Transverse colon (tissue), 4 donors: ENCODE measurements at regions of chr2 and their contacts with region 1.

Region 1: GRCh38 chr2:224357098-224357901 is 44.6 kb downstream of the FAM124B start:
- DNase-seq: peak; percentile 53
- H3K4me3 ChIP-seq: no peak overlapping the region
- H3K27ac ChIP-seq: no peak overlapping the region
- H3K4me1 ChIP-seq: no peaks in the 10 kb centered on the region
- H3K27me3 ChIP-seq: no peaks in the 10 kb centered on the region
- CTCF ChIP-seq: peak; percentile 74 to 85 (median 83)
- EP300 ChIP-seq: no peak
- POLR2A ChIP-seq: no peak

Region 2: GRCh38 chr2:224077773-224078507 is 279.4 kb before region 1 on chr2:
- in situ Hi-C with region 1: no loop called
- intact Hi-C with region 1: no loop called
- DNase-seq: no peak
- H3K4me3 ChIP-seq: no peak overlapping the region
- H3K27ac ChIP-seq: no peak overlapping the region
- H3K4me1 ChIP-seq: no peaks in the 10 kb centered on the region
- H3K27me3 ChIP-seq: no peaks in the 10 kb centered on the region
- CTCF ChIP-seq: no peak
- EP300 ChIP-seq: no peak
- POLR2A ChIP-seq: no peak

Region 3: GRCh38 chr2:224449212-224450147 is 92.2 kb after region 1 on chr2:
- in situ Hi-C with region 1: no loop called
- intact Hi-C with region 1: loop called (anchors 10 kb)
- DNase-seq: no peak
- H3K4me3 ChIP-seq: no peak overlapping the region
- H3K27ac ChIP-seq: no peak overlapping the region
- H3K4me1 ChIP-seq: no peaks in the 10 kb centered on the region
- H3K27me3 ChIP-seq: no peaks in the 10 kb centered on the region
- CTCF ChIP-seq: peak in 3 of 5 experiments; percentile 25 to 31 (median 26)
- EP300 ChIP-seq: no peak
- POLR2A ChIP-seq: no peak

Region 4: DNA sequence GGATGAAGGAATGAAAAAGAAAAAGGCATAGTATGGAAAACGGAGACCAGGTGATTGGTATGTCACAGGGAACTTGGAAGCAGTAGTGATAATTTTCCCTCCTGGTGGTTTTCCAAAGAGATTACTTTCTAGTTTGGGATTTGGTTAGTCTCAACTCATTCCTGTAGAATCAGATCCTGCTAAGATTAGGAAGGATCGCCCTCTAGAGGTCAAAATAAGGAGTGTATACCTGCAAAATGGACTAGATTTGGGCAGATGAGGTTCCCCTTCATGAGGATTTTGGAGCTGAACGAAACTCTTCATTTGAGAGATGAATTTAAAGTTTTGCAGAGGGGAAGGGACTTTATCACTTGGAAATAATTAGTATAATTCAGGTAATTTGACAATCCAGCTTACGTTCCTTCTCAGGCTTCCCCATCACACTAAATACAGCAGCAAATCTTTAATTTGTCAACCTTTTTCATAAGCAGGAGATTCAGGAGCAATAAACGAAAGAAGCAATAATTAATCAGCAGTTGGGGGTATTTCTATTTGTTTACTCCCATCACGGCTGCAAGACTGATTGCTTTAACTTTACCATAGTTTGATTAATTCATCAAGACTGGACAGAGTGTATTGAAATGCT is 293.6 kb after region 1 on chr2:
- in situ Hi-C with region 1: loop called (anchors 5 to 10 kb)
- intact Hi-C with region 1: loop called (anchors 5 kb)
- DNase-seq: no peak
- H3K4me3 ChIP-seq: no peak overlapping the region
- H3K27ac ChIP-seq: no peak overlapping the region
- H3K4me1 ChIP-seq: peaks cover 0 to 8% (median 0%) of the 10 kb centered on the region in 4 donors
- H3K27me3 ChIP-seq: no peaks in the 10 kb centered on the region
- CTCF ChIP-seq: peak; percentile 67 to 83 (median 77)
- EP300 ChIP-seq: no peak
- POLR2A ChIP-seq: no peak

Region 5: GRCh38 chr2:224764565-224765236 is 407.4 kb after region 1 on chr2:
- in situ Hi-C with region 1: loop called in 1 of 4 experiments (anchors 25 kb)
- intact Hi-C with region 1: no loop called
- DNase-seq: no peak
- H3K4me3 ChIP-seq: no peak overlapping the region
- H3K27ac ChIP-seq: no peak overlapping the region
- H3K4me1 ChIP-seq: no peaks in the 10 kb centered on the region
- H3K27me3 ChIP-seq: no peaks in the 10 kb centered on the region
- CTCF ChIP-seq: no peak
- EP300 ChIP-seq: no peak
- POLR2A ChIP-seq: no peak

Region 6: DNA sequence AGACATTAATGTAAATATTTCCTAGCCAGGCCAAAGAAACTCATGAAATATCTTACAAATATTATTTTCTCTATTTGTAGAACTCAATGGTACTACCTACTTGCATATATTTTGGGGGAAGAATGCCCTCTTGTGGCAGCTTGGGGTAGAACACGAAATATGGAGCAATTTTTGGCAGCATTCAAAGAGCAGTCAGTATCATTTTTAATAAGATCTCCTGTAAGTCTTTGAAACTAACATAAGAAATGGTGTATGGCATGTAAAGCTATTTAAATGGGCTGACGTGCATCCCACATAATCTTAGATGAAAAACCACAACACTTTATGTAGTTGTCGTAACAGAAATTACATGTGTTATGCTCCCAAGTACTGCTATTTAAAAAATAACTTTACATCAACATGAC is 421.2 kb after region 1 on chr2:
- in situ Hi-C with region 1: loop called in 3 of 4 experiments (anchors 5 to 25 kb)
- intact Hi-C with region 1: no loop called
- DNase-seq: peak; percentile 64
- H3K4me3 ChIP-seq: no peak overlapping the region
- H3K27ac ChIP-seq: no peak overlapping the region
- H3K4me1 ChIP-seq: peaks cover 5 to 26% (median 10%) of the 10 kb centered on the region in 4 donors
- H3K27me3 ChIP-seq: no peaks in the 10 kb centered on the region
- CTCF ChIP-seq: peak; percentile 65 to 77 (median 72)
- EP300 ChIP-seq: no peak
- POLR2A ChIP-seq: no peak

Region 7: DNA sequence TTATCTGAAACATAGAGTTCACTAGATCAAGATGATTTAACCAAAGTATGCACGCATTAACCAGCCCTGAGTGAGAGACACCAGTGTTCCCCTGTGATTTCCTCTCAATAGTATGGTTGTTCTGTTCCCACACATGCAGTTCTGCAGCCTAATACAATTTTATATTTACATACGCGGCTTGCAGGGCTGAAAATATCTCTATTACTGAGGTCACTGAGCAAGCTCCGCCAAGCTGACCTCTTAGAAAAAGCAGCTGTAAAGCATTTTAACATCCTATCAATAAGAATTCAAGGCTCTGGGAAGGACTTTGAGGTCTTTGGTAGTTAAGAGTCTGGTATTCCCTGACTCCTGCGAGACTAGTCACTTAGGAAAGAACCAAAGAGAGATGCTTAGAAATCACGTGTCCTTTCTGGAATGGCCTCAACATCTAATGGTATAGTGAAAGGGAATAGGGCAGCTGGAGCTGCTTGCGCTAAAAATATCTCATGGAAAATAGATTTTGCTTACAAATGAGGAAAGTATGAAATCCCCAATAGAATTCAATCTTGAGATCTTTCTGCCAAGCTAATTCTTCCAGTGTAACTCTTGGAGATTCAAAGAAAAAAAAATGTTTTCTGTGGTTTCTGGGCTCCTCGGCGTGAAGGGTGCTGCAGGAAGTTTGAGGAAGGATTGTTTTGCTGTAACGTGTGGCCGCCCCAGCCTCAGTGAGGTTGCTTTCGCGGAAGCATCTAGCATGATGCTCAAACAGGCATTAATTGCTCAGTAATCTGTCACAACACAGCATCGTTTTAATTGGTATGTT is 625.8 kb after region 1 on chr2:
- in situ Hi-C with region 1: loop called in 1 of 4 experiments (anchors 25 kb)
- intact Hi-C with region 1: no loop called
- DNase-seq: peak; percentile 33
- H3K4me3 ChIP-seq: peak overlapping the region in 3 of 4 donors; percentile 0 to 12 (median 10)
- H3K27ac ChIP-seq: peak overlapping the region; percentile 53 to 75 (median 58)
- H3K4me1 ChIP-seq: peaks cover 0 to 12% (median 2%) of the 10 kb centered on the region in 4 donors
- H3K27me3 ChIP-seq: no peaks in the 10 kb centered on the region
- CTCF ChIP-seq: no peak
- EP300 ChIP-seq: no peak
- POLR2A ChIP-seq: no peak